ENCODE measurements at regions of chr5 and their contacts with region 1.

Region 1: DNA sequence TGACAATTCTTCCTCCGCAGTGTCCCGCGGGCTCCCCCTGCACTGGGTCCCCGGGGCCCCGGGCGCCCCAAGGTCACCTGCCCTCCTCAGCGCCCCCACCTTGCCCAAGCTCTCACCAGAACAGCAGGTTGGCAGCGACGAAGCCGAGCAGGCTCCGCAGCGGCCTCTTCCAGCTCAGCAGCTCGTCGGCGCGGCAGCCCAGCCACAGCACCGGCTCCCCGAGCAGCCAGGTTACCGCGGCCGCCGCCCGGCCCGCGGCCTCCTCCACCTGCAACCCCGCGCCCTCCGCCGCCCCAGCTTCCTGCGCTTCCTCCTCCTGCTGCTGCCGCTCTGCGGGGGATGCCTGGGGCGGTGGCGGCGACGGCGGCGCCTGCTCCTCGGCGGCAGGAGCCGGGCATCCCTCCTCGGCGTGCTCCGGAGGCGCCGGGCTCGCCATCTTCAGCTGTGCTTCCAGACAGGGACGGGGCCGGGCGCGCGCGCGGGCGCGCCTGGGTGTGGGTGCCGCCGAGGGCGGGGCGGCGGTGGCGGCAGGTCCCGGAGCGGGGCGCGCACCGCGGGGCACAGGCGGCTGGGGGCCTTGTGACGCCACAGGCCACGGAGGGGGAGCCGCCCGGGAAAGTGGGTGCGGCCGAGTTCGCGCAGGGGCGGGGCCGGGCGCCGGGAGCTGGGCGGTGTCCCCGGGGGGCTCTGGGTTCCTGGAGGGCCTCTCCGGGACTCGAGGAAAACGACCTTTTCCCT is at the start of gene RETREG1:
- DNase-seq: peak; percentile 73 to 93 (median 90)
- ATAC-seq: peak; percentile 80
- H3K4me3 ChIP-seq: peak within 1 kb of the TSS; percentile 69 to 79
- H3K4me3 Mint-ChIP-seq: peak within 1 kb of the TSS; percentile 98
- H3K27ac ChIP-seq: peak within 1 kb of the TSS; percentile 93 to 97
- H3K27ac Mint-ChIP-seq: peak within 1 kb of the TSS; percentile 97
- H3K4me1 ChIP-seq: peaks cover 46% of the 10 kb centered on the region
- H3K4me1 Mint-ChIP-seq: peaks cover 48% of the 10 kb centered on the region
- H3K27me3 ChIP-seq: peaks cover 0 to 4% of the 10 kb centered on the region in 2 experiments
- H3K27me3 Mint-ChIP-seq: no peaks in the 10 kb centered on the region
- CTCF ChIP-seq: no peak
- total RNA-seq, gene RETREG1: 62.2 to 73.9 TPM

Region 2: GRCh38 chr5:16465544-16466466 is 150.9 kb before region 1 on chr5 and contains the start of gene ZNF622:
- CTCF ChIA-PET with region 1: no interaction called
- POLR2A ChIA-PET with region 1: interaction called, 8 read pairs
- intact Hi-C with region 1: loop called (anchors 2 to 5 kb)
- DNase-seq: peak; percentile 75 to 95 (median 89)
- ATAC-seq: peak; percentile 91
- H3K4me3 ChIP-seq: peak within 1 kb of the TSS; percentile 80 to 81
- H3K4me3 Mint-ChIP-seq: peak within 1 kb of the TSS; percentile 96
- H3K27ac ChIP-seq: peak within 1 kb of the TSS; percentile 76 to 90
- H3K27ac Mint-ChIP-seq: peak within 1 kb of the TSS; percentile 95
- H3K4me1 ChIP-seq: peaks cover 58% of the 10 kb centered on the region
- H3K4me1 Mint-ChIP-seq: peaks cover 87% of the 10 kb centered on the region
- H3K27me3 ChIP-seq: no peaks in the 10 kb centered on the region
- H3K27me3 Mint-ChIP-seq: no peaks in the 10 kb centered on the region
- CTCF ChIP-seq: no peak
- total RNA-seq, gene ZNF622: 64.8 to 66.1 TPM

Region 3: GRCh38 chr5:16552666-16553343 is 63.9 kb before region 1 on chr5:
- CTCF ChIA-PET with region 1: no interaction called
- POLR2A ChIA-PET with region 1: no interaction called
- intact Hi-C with region 1: loop called in 1 of 2 experiments (anchors 5 kb)
- DNase-seq: peak in 8 of 9 experiments; percentile 11 to 63 (median 49)
- ATAC-seq: peak; percentile 86
- H3K4me3 ChIP-seq: no peak overlapping the region
- H3K4me3 Mint-ChIP-seq: no peak overlapping the region
- H3K27ac ChIP-seq: no peak overlapping the region
- H3K27ac Mint-ChIP-seq: no peak overlapping the region
- H3K4me1 ChIP-seq: no peaks in the 10 kb centered on the region
- H3K4me1 Mint-ChIP-seq: peaks cover 54% of the 10 kb centered on the region
- H3K27me3 ChIP-seq: no peaks in the 10 kb centered on the region
- H3K27me3 Mint-ChIP-seq: no peaks in the 10 kb centered on the region
- CTCF ChIP-seq: peak; percentile 73

Region 4: DNA sequence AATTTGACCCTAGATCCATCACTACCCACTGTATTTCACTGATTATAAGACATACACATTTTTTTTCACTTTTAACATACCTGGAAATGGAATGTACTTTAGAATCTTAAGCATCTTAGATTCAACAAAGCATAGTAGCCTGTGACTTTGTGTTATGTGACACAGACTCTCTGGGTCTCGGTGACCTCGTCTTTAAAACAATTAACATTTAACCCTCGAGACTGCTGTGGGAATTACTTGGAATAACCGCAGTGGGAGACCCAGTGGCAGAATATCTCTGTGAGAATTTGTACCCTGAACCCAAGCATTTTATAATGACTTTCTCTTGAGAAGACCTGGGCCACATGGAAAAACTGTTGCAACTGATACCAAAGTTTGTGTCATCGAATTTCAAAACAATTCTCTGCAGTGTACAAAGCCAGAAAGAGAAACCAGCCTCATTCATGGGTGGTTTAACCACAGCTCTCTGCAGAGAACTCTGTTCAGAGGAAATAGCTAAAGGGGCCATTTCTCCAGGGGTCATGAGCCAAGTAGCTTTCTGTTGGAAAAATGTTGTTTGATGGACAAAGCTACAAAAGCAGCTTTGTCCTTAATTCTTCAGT is 10.1 kb after region 1 on chr5:
- CTCF ChIA-PET with region 1: interaction called, 16 read pairs
- POLR2A ChIA-PET with region 1: interaction called, 89 read pairs
- intact Hi-C with region 1: loop called in 1 of 2 experiments (anchors 1 kb)
- DNase-seq: peak in 3 of 9 experiments; percentile 13 to 61 (median 20)
- ATAC-seq: peak; percentile 30
- H3K4me3 ChIP-seq: no peak overlapping the region
- H3K4me3 Mint-ChIP-seq: peak overlapping the region; percentile 20
- H3K27ac ChIP-seq: no peak overlapping the region
- H3K27ac Mint-ChIP-seq: peak overlapping the region; percentile 82
- H3K4me1 ChIP-seq: peaks cover 55% of the 10 kb centered on the region
- H3K4me1 Mint-ChIP-seq: peaks cover 70% of the 10 kb centered on the region
- H3K27me3 ChIP-seq: no peaks in the 10 kb centered on the region
- H3K27me3 Mint-ChIP-seq: no peaks in the 10 kb centered on the region
- CTCF ChIP-seq: no peak

Measured in CD8-positive, alpha-beta T cell (primary cell).